ENCODE measurements at regions of chr3 and their contacts with region 1.

Region 1: GRCh38 chr3:50192689-50193141 is 1.3 kb downstream of the GNAT1 start:
- DNase-seq: peak; percentile 85
- ATAC-seq: peak; percentile 20
- H3K4me3 ChIP-seq: no peak overlapping the region
- H3K27ac ChIP-seq: no peak overlapping the region
- H3K4me1 ChIP-seq: no peaks in the 10 kb centered on the region; the same call in 1 of the 2 replicates
- H3K27me3 ChIP-seq: no peaks in the 10 kb centered on the region
- CTCF ChIP-seq: peak; percentile 96

Region 2: GRCh38 chr3:50154840-50155474 is 37.8 kb before region 1 on chr3 and contains the start of gene SEMA3F:
- CTCF ChIA-PET with region 1: no interaction called
- POLR2A ChIA-PET with region 1: no interaction called
- intact Hi-C with region 1: loop called (anchors 1 kb)
- DNase-seq: peak; percentile 85
- ATAC-seq: peak; percentile 71
- H3K4me3 ChIP-seq: peak within 1 kb of the TSS; percentile 81
- H3K27ac ChIP-seq: no peak within 1 kb of the TSS
- H3K4me1 ChIP-seq: peaks cover 37% of the 10 kb centered on the region
- H3K27me3 ChIP-seq: no peaks in the 10 kb centered on the region
- CTCF ChIP-seq: no peak
- total RNA-seq, gene SEMA3F: 47.3 and 50.5 TPM in 2 replicates

Region 3: DNA sequence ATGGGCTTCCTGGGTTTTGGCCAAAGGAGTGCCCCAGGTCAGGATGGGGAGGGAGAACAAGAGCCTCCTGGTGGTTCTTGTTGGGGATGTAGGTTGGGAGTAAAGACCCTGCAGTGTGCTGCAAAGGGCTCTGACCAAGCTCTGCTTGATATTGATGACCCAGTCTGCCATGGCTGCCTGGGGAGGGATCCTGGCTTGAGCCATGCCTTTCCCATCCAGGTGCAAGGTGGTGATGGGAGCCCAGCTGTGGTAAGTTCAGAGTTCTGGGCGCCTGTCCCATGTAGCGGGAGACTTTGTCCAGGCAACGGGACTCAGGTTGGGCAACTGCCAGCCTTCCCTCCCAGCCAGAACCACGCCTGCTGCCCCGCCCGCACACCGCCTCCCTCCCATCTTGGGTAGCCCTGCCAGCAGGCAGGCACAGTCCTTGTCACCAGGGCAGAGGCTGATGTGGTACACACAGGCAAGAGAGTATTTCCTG is 45.9 kb after region 1 on chr3:
- CTCF ChIA-PET with region 1: no interaction called
- POLR2A ChIA-PET with region 1: no interaction called
- intact Hi-C with region 1: no loop called
- DNase-seq: peak; percentile 81
- ATAC-seq: peak; percentile 16
- H3K4me3 ChIP-seq: peak overlapping the region; percentile 78
- H3K27ac ChIP-seq: peak overlapping the region; percentile 55
- H3K4me1 ChIP-seq: peaks cover 15% of the 10 kb centered on the region
- H3K27me3 ChIP-seq: no peaks in the 10 kb centered on the region
- CTCF ChIP-seq: 0 out of 2 replicates have a peak, but pooled peaks have one; percentile 17

Region 4: GRCh38 chr3:50272911-50273693 is 80.4 kb after region 1 on chr3:
- CTCF ChIA-PET with region 1: no interaction called
- POLR2A ChIA-PET with region 1: no interaction called
- intact Hi-C with region 1: loop called (anchors 1 kb)
- DNase-seq: peak; percentile 92
- ATAC-seq: peak; percentile 42
- H3K4me3 ChIP-seq: peak overlapping the region; percentile 59
- H3K27ac ChIP-seq: no peak overlapping the region
- H3K4me1 ChIP-seq: peaks cover 38% of the 10 kb centered on the region
- H3K27me3 ChIP-seq: no peaks in the 10 kb centered on the region
- CTCF ChIP-seq: peak; percentile 96